ENCODE measurements at regions of chr3 and their contacts with region 1.

Region 1: GRCh38 chr3:152268555-152269425 is at the start of gene MBNL1:
- DNase-seq: peak; percentile 67 to 93 (median 82)
- ATAC-seq: peak; percentile 55 to 65
- H3K4me3 Mint-ChIP-seq: peak within 1 kb of the TSS; percentile 77 to 99 (median 98)
- H3K27ac Mint-ChIP-seq: peak within 1 kb of the TSS; percentile 92 to 99 (median 98)
- H3K4me1 Mint-ChIP-seq: peaks cover 34 to 67% (median 61%) of the 10 kb centered on the region in 4 donors
- H3K27me3 Mint-ChIP-seq: no peaks in the 10 kb centered on the region
- polyA plus RNA-seq, gene MBNL1: 298 to 370 (median 331) TPM

Region 2: GRCh38 chr3:152159328-152159727 is 109.5 kb before region 1 on chr3:
- POLR2A ChIA-PET with region 1: no interaction called
- DNase-seq: no peak
- ATAC-seq: no peak
- H3K4me3 Mint-ChIP-seq: no peak overlapping the region
- H3K27ac Mint-ChIP-seq: no peak overlapping the region
- H3K4me1 Mint-ChIP-seq: peaks cover 0 to 2% (median 0%) of the 10 kb centered on the region in 4 donors
- H3K27me3 Mint-ChIP-seq: peaks cover 0 to 6% (median 0%) of the 10 kb centered on the region in 5 donors

Region 3: GRCh38 chr3:152193673-152194267 is 75.0 kb before region 1 on chr3:
- POLR2A ChIA-PET with region 1: interaction called, 67 read pairs
- DNase-seq: peak in 6 of 10 donors; percentile 10 to 57 (median 32)
- ATAC-seq: peak; percentile 61 to 65
- H3K4me3 Mint-ChIP-seq: peak overlapping the region; percentile 69 to 90 (median 85)
- H3K27ac Mint-ChIP-seq: peak overlapping the region; percentile 85 to 99 (median 93)
- H3K4me1 Mint-ChIP-seq: peaks cover 31 to 85% (median 75%) of the 10 kb centered on the region in 4 donors
- H3K27me3 Mint-ChIP-seq: no peaks in the 10 kb centered on the region

Region 4: DNA sequence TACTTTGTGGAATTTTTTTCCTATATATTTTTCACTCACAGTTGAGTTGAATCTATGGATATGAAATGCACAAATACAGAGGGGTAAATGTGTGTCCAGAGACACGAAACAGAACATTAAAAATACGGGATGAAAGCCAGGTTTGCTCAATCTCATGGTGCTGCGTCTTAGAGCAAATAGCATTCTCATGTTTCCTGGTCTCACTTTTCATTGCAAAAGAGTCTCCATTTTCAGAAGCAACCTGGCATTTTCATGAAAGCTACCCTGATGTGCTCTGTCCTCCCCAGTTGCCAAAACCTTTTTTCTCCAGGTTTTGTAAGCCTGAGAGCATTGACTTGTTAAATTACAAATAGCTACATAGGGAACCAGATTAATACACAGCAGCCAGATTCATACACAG is 49.6 kb before region 1 on chr3:
- POLR2A ChIA-PET with region 1: interaction called, 33 read pairs
- DNase-seq: no peak
- ATAC-seq: no peak
- H3K4me3 Mint-ChIP-seq: peak overlapping the region; percentile 34 to 89 (median 82)
- H3K27ac Mint-ChIP-seq: peak overlapping the region; percentile 57 to 97 (median 90)
- H3K4me1 Mint-ChIP-seq: peaks cover 28 to 68% (median 59%) of the 10 kb centered on the region in 4 donors
- H3K27me3 Mint-ChIP-seq: no peaks in the 10 kb centered on the region

Region 5: DNA sequence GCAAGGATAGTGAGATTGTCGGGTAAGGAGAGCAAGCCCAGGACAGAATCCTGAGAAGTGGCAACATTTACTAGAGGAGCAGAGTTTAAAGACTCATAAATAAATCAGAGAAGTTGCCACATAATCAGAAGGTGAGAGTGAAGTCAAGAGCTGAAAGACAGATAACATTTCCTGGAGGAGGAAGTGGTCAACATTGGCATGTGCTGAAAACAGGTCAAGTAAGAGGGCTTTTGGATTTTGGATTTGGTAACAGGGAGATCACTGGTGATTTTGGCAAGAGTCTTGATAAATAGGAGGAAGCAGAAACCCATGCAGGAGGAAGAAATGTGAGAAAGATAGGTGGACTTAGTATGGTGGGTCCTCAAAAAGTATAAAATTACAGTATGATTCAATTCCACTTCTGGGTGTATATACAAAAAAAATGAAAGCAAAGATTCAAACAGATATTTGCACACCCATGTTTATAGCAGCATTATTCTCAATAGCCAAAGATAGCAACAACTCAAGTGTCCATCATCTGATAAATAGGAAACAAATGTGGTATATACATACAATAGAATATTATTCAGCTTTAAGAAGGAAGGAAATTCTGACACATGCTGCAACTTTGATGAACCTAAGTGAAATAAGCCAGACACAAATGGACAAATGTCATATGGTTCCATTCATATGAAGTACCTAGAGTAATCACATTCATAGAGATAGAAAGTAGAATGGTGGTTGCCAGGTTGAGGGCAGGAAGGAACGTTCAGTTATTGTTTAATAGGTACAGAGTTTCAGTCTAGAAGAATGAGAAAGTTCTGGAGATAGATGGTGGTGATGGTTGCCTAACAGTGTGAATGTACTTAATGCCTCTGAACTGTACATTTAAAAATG is 27.4 kb before region 1 on chr3:
- POLR2A ChIA-PET with region 1: interaction called, 141 read pairs
- DNase-seq: no peak
- ATAC-seq: peak in 1 of 2 donors; percentile 37
- H3K4me3 Mint-ChIP-seq: peak overlapping the region; percentile 40 to 97 (median 94)
- H3K27ac Mint-ChIP-seq: peak overlapping the region; percentile 82 to 96 (median 93)
- H3K4me1 Mint-ChIP-seq: peaks cover 20 to 70% (median 61%) of the 10 kb centered on the region in 4 donors
- H3K27me3 Mint-ChIP-seq: no peaks in the 10 kb centered on the region

Region 6: GRCh38 chr3:152281133-152281713 is 12.4 kb after region 1 on chr3:
- POLR2A ChIA-PET with region 1: interaction called, 37 read pairs
- DNase-seq: no peak
- ATAC-seq: peak in 1 of 2 donors; percentile 7
- H3K4me3 Mint-ChIP-seq: peak overlapping the region; percentile 36 to 82 (median 76)
- H3K27ac Mint-ChIP-seq: peak overlapping the region; percentile 53 to 93 (median 84)
- H3K4me1 Mint-ChIP-seq: peaks cover 34 to 85% (median 78%) of the 10 kb centered on the region in 4 donors
- H3K27me3 Mint-ChIP-seq: no peaks in the 10 kb centered on the region

Region 7: GRCh38 chr3:152365766-152366593 is 97.2 kb after region 1 on chr3:
- POLR2A ChIA-PET with region 1: no interaction called
- DNase-seq: no peak
- ATAC-seq: peak in 1 of 2 donors; percentile 20
- H3K4me3 Mint-ChIP-seq: peak overlapping the region in 1 of 10 donors; percentile 18
- H3K27ac Mint-ChIP-seq: peak overlapping the region in 4 of 10 donors; percentile 4 to 79 (median 19)
- H3K4me1 Mint-ChIP-seq: peaks cover 45 to 82% (median 71%) of the 10 kb centered on the region in 4 donors
- H3K27me3 Mint-ChIP-seq: no peaks in the 10 kb centered on the region